ENCODE measurements at regions of chr11 and their contacts with region 1.

Region 1: GRCh38 chr11:128482512-128483191 is 104.7 kb downstream of the ETS1 start:
- DNase-seq: no peak
- H3K4me3 Mint-ChIP-seq: peak overlapping the region; percentile 75
- H3K27ac Mint-ChIP-seq: peak overlapping the region; percentile 95
- H3K4me1 Mint-ChIP-seq: peaks cover 91% of the 10 kb centered on the region
- H3K27me3 Mint-ChIP-seq: no peaks in the 10 kb centered on the region

Region 2: DNA sequence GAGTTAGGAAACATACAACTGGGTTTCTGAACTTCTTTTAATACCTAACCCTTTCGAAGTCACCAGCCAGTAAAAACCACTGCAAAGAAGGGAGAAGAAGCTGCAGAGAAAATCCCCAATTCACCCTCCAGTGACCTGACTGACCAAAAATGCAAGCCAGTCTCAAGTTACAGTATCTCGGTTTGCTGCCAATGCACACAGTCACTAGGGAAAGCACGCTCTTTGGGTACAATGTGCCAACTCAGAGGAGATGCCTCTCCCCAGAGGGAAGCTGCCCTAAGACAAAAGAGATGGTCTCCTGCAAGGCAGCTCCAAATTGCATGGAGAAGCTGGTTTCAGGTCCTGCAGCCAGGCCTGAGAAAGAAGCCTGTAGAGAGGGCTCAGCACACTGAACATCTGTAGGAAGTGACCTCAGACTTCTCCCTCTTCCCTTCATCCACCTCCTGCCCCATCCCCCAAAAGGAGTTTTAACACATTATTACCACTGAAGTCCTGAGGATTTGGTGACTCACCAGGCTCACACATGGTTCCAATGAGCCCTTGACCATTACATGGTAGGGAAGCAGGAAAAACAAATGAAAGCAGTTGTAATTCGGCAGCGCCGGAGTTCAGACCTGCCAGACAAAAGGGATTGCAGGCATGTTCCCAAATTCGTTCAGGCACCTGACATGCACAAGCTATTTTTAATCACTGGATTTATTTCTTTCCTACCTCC is 14.6 kb after region 1 on chr11:
- intact Hi-C with region 1: loop called (anchors 1 kb)
- DNase-seq: no peak
- H3K4me3 Mint-ChIP-seq: peak overlapping the region; percentile 57
- H3K27ac Mint-ChIP-seq: peak overlapping the region; percentile 94
- H3K4me1 Mint-ChIP-seq: peaks cover 94% of the 10 kb centered on the region
- H3K27me3 Mint-ChIP-seq: no peaks in the 10 kb centered on the region

Region 3: GRCh38 chr11:128506999-128507611 is 24.5 kb after region 1 on chr11:
- intact Hi-C with region 1: loop called (anchors 2 kb)
- DNase-seq: no peak
- H3K4me3 Mint-ChIP-seq: peak overlapping the region; percentile 79
- H3K27ac Mint-ChIP-seq: peak overlapping the region; percentile 96
- H3K4me1 Mint-ChIP-seq: peaks cover 96% of the 10 kb centered on the region
- H3K27me3 Mint-ChIP-seq: no peaks in the 10 kb centered on the region